Right ventricle myocardium inferior (tissue), 1 donor: ENCODE measurements at regions of chr4 and their contacts with region 1.

Region 1: DNA sequence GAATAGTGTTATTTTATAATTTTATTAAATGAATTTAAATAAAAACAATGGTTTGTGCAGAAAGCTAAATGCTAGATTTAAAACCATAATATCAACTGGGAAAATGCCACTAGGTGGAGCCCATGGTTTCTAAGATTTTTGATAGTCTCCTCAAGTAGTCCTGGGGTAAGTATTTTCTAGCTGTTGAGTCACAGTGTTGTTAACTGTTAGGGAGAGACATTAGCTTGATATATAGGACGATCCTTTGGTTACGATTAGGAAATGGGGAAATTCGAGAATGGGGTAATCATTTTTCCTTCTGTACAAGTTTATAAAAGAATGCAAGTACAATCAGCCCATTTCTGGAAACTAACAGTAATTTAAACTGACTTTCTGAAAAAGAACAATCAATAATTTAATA is 378.4 kb downstream of the ANKRD50 start:
- DNase-seq: no peak
- ATAC-seq: no peak

Region 2: GRCh38 chr4:124610210-124610609 is 276.1 kb after region 1 on chr4:
- intact Hi-C with region 1: no loop called
- DNase-seq: no peak
- ATAC-seq: no peak

Region 3: DNA sequence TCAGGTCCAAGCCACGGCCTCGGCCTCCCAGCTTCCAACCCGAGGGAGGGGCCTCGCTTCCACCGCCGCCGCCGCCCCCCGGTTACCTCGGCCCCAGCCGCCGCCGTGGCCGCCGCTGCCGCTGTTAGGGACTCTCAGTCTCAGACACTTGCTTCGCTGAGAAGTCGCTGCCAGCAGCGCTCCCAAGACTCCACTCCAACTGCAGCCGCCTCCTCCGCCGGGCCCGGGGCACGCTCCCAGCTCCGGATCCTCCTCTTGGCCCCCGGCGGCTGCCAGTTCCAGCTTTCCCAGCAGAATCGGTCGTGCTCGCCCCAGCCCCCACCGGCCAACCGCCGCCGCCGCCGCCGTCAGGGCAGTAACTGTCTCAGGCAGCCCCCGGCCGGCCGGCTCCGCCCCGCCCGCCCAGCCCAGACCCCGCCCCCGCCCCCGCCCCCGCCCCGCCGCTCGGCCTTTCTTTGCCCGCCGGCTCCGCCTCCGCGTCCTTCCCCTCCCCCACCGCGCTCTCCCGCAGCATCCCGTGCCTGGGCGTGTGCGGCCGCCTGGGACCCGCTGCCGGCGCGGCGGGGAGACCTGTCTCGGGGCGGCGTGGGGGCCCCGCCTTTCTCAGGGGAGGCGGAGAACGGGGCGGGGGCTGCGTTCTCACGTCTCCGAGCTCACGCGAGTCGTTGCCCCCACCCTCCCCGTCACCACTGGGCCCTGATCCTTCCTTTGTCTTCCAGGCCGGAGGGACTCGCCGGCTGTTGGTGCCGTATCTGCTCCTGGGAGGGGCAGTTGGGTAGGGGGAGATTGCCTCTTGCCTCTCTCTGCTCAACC is 378.5 kb after region 1 on chr4 and contains the start of gene ANKRD50:
- intact Hi-C with region 1: loop called (anchors 10 kb)
- DNase-seq: peak; percentile 94
- ATAC-seq: peak; percentile 91
- total RNA-seq, gene ANKRD50: 6.5 TPM

Region 4: DNA sequence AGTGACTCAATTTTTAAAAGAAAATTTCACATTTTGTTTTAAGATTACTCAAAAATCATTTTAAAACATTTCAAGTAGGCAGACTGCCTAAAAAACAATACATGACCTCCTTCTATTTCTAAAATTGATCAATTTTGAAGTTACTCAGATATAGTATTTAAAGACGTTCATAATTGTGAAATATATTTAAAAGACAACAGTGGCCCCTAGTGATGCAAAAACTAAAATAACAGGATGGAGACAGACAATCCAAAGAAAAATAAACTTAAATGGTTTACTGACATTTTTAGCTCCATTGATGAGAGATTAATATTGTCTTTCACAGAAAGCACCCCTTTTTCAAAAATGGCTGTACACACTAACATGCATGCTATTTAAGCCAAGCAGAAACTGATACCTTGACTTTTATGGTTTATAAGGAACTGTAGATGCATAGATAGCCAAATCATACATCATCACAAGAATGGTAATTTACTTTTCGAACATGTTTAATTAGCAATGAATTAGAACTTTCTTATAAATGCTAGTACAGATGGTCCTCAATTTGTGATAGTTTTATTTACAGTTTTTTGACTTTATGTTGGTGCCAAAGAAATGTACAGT is 910.8 kb after region 1 on chr4:
- intact Hi-C with region 1: loop called (anchors 2 kb)
- DNase-seq: no peak
- ATAC-seq: no peak

Region 5: DNA sequence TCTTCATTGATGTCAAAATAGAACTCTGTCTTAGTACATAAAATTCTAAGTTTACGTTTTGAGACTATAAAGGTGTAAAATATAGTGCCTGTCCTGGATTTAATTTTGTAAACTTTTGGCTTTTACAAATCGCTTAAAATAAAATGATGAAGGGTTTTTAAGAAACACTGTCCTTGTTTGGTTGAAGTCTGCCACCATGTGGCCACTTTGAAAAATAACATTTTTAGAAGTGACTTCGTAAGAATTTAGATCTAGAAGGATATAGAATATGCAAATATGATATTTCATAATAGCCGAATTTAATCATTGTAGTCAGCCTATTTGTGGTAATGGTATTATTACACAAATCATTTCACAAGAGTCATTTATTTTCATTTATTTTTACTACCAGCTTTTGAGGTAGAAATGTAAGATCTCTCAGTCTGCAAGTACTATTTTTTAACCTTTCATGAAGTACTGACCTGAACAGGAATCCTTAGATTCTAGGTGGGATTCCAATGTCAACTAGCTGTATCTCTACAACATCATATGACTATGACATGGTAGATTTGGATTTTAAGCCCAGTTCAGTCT is 949.7 kb after region 1 on chr4:
- intact Hi-C with region 1: loop called (anchors 5 kb)
- DNase-seq: no peak
- ATAC-seq: no peak